Dorsolateral prefrontal cortex (tissue), 120 donors: ENCODE measurements at regions of chr10 and their contacts with region 1.

Region 1: GRCh38 chr10:47311932-47312662 is 10.2 kb upstream of the GDF2 start:
- DNase-seq: peak; percentile 72 to 89 (median 86)
- H3K4me3 ChIP-seq: no peak overlapping the region
- H3K27ac ChIP-seq: no peak overlapping the region
- H3K27me3 ChIP-seq: peaks cover 0 to 4% (median 0%) of the 10 kb centered on the region in 45 donors
- CTCF ChIP-seq: peak; percentile 20 to 95 (median 87)

Region 2: GRCh38 chr10:46992803-46993561 is 319.1 kb before region 1 on chr10:
- intact Hi-C with region 1: loop called in 1 of 2 experiments (anchors 10 kb)
- DNase-seq: peak in 5 of 10 donors; percentile 21 to 57 (median 45)
- H3K4me3 ChIP-seq: peak overlapping the region in 12 of 59 donors; percentile 8 to 55 (median 28)
- H3K27ac ChIP-seq: peak overlapping the region in 36 of 59 donors; percentile 1 to 74 (median 60)
- H3K27me3 ChIP-seq: no peaks in the 10 kb centered on the region
- CTCF ChIP-seq: peak in 53 of 56 donors; percentile 22 to 82 (median 56)

Region 3: GRCh38 chr10:47024399-47025252 is 287.5 kb before region 1 on chr10:
- intact Hi-C with region 1: loop called in 1 of 2 experiments (anchors 2 kb)
- DNase-seq: peak; percentile 57 to 86 (median 78)
- H3K4me3 ChIP-seq: no peak overlapping the region
- H3K27ac ChIP-seq: no peak overlapping the region
- H3K27me3 ChIP-seq: peaks cover 0 to 2% (median 0%) of the 10 kb centered on the region in 45 donors
- CTCF ChIP-seq: peak; percentile 41 to 89 (median 78)